Psoas muscle (tissue), 8 donors: ENCODE measurements at regions of chr5 and their contacts with region 1.

Region 1: DNA sequence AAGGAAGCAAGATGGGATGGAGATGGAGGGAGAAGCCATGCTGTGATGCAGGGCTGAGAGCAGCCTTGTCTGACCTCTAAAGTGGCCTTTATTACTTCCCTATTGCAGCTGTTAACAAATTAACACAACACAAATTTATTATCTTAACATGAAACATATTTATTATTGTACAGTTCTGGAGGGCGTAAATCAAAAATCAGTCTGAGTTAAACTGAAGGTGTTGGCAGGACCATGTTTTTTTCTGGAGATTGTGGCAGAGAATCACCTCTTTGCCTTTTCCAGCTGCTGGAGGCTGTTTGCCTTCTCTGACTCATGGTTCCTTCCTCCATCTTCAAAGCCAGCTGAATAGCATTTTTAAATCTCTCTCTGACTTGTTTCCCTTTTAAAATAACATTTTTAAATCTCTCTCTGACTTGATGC is 7.2 kb upstream of the MCC start:
- DNase-seq: no peak
- ATAC-seq: no peak
- H3K4me3 ChIP-seq: no peak overlapping the region
- H3K27ac ChIP-seq: no peak overlapping the region
- H3K4me1 ChIP-seq: no peaks in the 10 kb centered on the region
- H3K27me3 ChIP-seq: peaks cover 0 to 6% (median 0%) of the 10 kb centered on the region in 3 donors
- CTCF ChIP-seq: no peak

Region 2: GRCh38 chr5:113390224-113390623 is 105.2 kb before region 1 on chr5:
- intact Hi-C with region 1: loop called in 1 of 2 experiments (anchors 10 kb)
- DNase-seq: no peak
- ATAC-seq: no peak
- H3K4me3 ChIP-seq: no peak overlapping the region
- H3K27ac ChIP-seq: no peak overlapping the region
- H3K4me1 ChIP-seq: no peaks in the 10 kb centered on the region
- H3K27me3 ChIP-seq: peaks cover 0 to 4% (median 0%) of the 10 kb centered on the region in 3 donors
- CTCF ChIP-seq: no peak

Region 3: DNA sequence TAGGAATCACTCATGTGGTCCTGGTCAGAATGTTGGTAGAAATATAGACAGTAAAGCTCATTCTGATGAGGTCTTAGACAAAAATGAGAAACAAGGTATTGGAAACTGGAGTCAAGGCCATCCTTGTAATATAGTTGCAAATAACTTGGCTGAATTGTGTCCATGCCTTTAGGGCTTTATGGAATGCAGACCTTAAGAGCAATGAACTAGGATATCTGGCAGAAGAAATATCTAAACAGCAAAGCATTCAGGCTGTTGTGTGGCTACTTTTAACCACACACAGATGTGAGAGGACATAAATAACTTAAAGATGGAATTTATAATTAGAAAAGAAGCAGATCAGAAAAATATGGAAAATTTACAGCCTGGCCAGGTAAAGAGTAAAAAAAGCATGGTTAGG is 146.3 kb after region 1 on chr5:
- intact Hi-C with region 1: no loop called
- DNase-seq: no peak
- ATAC-seq: no peak
- H3K4me3 ChIP-seq: no peak overlapping the region
- H3K27ac ChIP-seq: no peak overlapping the region
- H3K4me1 ChIP-seq: no peaks in the 10 kb centered on the region
- H3K27me3 ChIP-seq: peaks cover 0 to 3% (median 0%) of the 10 kb centered on the region in 3 donors
- CTCF ChIP-seq: no peak

Region 4: GRCh38 chr5:113771483-113771882 is 276.1 kb after region 1 on chr5:
- intact Hi-C with region 1: no loop called
- DNase-seq: no peak
- ATAC-seq: no peak
- H3K4me3 ChIP-seq: no peak overlapping the region
- H3K27ac ChIP-seq: no peak overlapping the region
- H3K4me1 ChIP-seq: no peaks in the 10 kb centered on the region
- H3K27me3 ChIP-seq: no peaks in the 10 kb centered on the region
- CTCF ChIP-seq: no peak